Calu3 (cell line): ENCODE measurements at regions of chrX and their contacts with region 1.

Region 1: GRCh38 chrX:72685810-72686463 is 28.2 kb downstream of the PHKA1 start:
- DNase-seq: peak; percentile 37
- H3K4me3 Mint-ChIP-seq: peak overlapping the region; percentile 29
- H3K27ac Mint-ChIP-seq: peak overlapping the region; percentile 96
- H3K4me1 Mint-ChIP-seq: peaks cover 14% of the 10 kb centered on the region
- H3K27me3 Mint-ChIP-seq: no peaks in the 10 kb centered on the region
- CTCF ChIP-seq: no peak

Region 2: GRCh38 chrX:72620550-72621145 is 65.3 kb before region 1 on chrX:
- CTCF ChIA-PET with region 1: no interaction called
- intact Hi-C with region 1: loop called (anchors 1 kb)
- DNase-seq: peak; percentile 73
- H3K4me3 Mint-ChIP-seq: peak overlapping the region; percentile 53
- H3K27ac Mint-ChIP-seq: peak overlapping the region; percentile 85
- H3K4me1 Mint-ChIP-seq: peaks cover 36% of the 10 kb centered on the region
- H3K27me3 Mint-ChIP-seq: no peaks in the 10 kb centered on the region
- CTCF ChIP-seq: no peak

Region 3: GRCh38 chrX:72714476-72714916 is 28.6 kb after region 1 on chrX:
- CTCF ChIA-PET with region 1: no interaction called
- intact Hi-C with region 1: loop called (anchors 2 kb)
- DNase-seq: peak; percentile 56
- H3K4me3 Mint-ChIP-seq: peak overlapping the region; percentile 91
- H3K27ac Mint-ChIP-seq: peak overlapping the region; percentile 63
- H3K4me1 Mint-ChIP-seq: peaks cover 15% of the 10 kb centered on the region
- H3K27me3 Mint-ChIP-seq: no peaks in the 10 kb centered on the region
- CTCF ChIP-seq: no peak